Mammary epithelial cell (primary cell): ENCODE measurements at regions of chr1 and their contacts with region 1.

Region 1: GRCh38 chr1:23098463-23099170 is 70.0 kb downstream of the LUZP1 start:
- DNase-seq: peak; percentile 65
- H3K4me3 ChIP-seq: no peak overlapping the region
- H3K27ac ChIP-seq: no peak overlapping the region
- H3K4me1 ChIP-seq: peaks cover 59% of the 10 kb centered on the region
- H3K27me3 ChIP-seq: no peaks in the 10 kb centered on the region
- CTCF ChIP-seq: peak; percentile 92 to 93

Region 2: GRCh38 chr1:23069675-23070074 is 28.9 kb before region 1 on chr1:
- CTCF ChIA-PET with region 1: no interaction called
- dilution Hi-C with region 1: no loop called
- in situ Hi-C with region 1: no loop called
- intact Hi-C with region 1: no loop called
- DNase-seq: no peak
- H3K4me3 ChIP-seq: no peak overlapping the region
- H3K27ac ChIP-seq: no peak overlapping the region
- H3K4me1 ChIP-seq: no peaks in the 10 kb centered on the region
- H3K27me3 ChIP-seq: no peaks in the 10 kb centered on the region
- CTCF ChIP-seq: no peak

Region 3: DNA sequence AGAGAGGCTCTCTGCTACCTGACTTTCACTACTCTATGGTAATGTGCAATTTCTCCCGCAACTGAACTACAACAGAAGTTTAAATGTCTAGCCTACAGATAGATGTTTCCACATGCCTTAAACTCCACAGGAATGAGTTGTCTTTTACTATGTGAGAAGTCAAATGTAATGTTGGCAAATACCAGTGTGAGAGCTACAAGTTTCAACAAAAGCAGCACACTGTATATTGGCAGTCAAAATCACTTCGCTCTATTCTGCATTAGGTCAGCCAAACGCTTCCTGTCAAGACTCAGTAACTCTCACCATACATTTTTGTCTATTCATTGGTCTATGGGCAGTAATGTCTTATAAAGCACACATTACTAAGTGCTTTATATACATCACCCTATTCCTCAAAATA is 28.2 kb after region 1 on chr1:
- CTCF ChIA-PET with region 1: no interaction called
- dilution Hi-C with region 1: no loop called
- in situ Hi-C with region 1: no loop called
- intact Hi-C with region 1: loop called (anchors 2 kb)
- DNase-seq: peak; percentile 91
- H3K4me3 ChIP-seq: peak overlapping the region in 2 of 3 experiments; percentile 3 to 8
- H3K27ac ChIP-seq: peak overlapping the region; percentile 68
- H3K4me1 ChIP-seq: peaks cover 60% of the 10 kb centered on the region
- H3K27me3 ChIP-seq: no peaks in the 10 kb centered on the region
- CTCF ChIP-seq: no peak

Region 4: DNA sequence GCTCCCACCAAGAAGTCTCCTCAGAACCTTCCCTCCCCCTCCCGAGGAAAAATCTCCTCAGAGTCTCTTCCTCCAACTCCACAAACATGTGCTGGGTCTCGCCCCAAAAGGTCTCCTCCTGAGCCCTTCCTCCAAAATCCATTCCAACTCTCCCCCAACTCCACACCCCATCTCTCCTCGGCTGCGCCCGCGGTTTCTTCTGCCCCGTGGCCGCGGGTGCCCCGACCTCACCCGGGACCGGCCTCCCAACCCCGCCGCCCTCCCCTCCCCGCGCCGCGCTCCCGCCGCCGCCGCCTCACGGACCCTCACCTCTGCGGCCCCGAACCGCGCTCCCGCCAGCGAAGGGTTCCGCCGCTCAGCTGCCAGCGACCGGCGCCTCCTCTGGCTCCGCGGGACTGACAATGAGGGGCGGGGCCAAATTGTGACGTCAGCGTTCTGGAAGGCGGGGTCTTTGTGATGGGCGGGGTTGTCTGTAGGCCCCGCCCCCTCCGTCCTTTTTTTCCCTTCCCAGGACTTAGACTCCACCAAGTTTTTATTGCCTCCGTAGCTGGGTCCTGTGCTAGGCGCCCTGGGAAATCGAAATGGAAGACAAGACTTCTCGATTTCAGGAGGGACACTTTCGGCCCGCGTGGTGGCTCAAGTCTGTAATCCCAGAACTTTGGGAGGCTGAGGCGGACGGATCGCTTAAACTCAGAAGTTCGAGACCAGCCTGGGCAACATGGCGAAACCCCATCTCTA is 70.0 kb after region 1 on chr1 and contains the start of gene LUZP1:
- CTCF ChIA-PET with region 1: interaction called, 6 read pairs
- dilution Hi-C with region 1: no loop called
- in situ Hi-C with region 1: no loop called
- intact Hi-C with region 1: loop called (anchors 1 kb)
- DNase-seq: peak; percentile 80
- H3K4me3 ChIP-seq: peak within 1 kb of the TSS; percentile 66 to 99 (median 85)
- H3K27ac ChIP-seq: peak within 1 kb of the TSS; percentile 94
- H3K4me1 ChIP-seq: peaks cover 42% of the 10 kb centered on the region
- H3K27me3 ChIP-seq: no peaks in the 10 kb centered on the region
- CTCF ChIP-seq: no peak
- total RNA-seq, gene LUZP1: 55.2 to 83.2 TPM

Region 5: DNA sequence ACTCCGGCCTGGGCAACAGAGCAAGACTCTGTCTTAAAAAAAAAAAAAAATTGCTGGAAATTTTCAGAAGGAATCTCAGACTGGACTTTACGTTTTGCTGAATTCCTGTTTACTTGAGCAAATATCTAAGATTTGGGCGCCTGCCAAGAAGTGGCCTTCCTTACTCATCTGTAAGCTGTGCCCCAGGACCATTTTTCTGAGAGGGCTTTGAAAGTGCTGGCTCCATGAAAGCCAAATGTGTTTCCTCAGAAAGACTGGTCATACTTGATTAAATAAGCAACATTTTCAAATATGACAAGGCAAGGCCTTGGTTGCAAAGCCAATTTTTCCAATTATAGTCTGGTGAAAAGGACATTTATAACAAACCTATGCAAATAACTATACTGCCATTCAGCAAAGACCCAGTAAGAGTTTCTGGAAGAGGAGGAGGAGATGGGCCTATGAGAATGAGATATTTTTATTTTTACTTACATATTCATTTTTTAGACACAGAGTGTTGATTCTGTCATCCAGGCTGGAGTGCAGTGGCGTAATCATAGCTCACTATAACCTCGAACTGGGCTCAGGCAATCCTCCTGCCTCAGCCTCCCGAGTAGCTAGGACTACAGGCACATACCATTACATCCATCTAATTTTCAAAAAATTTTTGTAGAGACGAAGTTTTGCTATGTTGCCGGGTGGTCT is 175.0 kb after region 1 on chr1:
- CTCF ChIA-PET with region 1: interaction called, 3 read pairs
- dilution Hi-C with region 1: no loop called
- in situ Hi-C with region 1: loop called in 1 of 2 experiments (anchors 5 kb)
- intact Hi-C with region 1: loop called (anchors 2 kb)
- DNase-seq: peak; percentile 36
- H3K4me3 ChIP-seq: no peak overlapping the region
- H3K27ac ChIP-seq: no peak overlapping the region
- H3K4me1 ChIP-seq: peaks cover 4% of the 10 kb centered on the region
- H3K27me3 ChIP-seq: no peaks in the 10 kb centered on the region
- CTCF ChIP-seq: no peak

Region 6: GRCh38 chr1:23282957-23283356 is 184.3 kb after region 1 on chr1:
- CTCF ChIA-PET with region 1: interaction called, 3 read pairs
- dilution Hi-C with region 1: no loop called
- in situ Hi-C with region 1: loop called in 1 of 2 experiments (anchors 5 kb)
- intact Hi-C with region 1: no loop called
- DNase-seq: peak; percentile 57
- H3K4me3 ChIP-seq: no peak overlapping the region
- H3K27ac ChIP-seq: peak overlapping the region; percentile 16
- H3K4me1 ChIP-seq: peaks cover 19% of the 10 kb centered on the region
- H3K27me3 ChIP-seq: no peaks in the 10 kb centered on the region
- CTCF ChIP-seq: no peak

Region 7: GRCh38 chr1:23470282-23471071 is 371.9 kb after region 1 on chr1:
- CTCF ChIA-PET with region 1: no interaction called
- dilution Hi-C with region 1: no loop called
- in situ Hi-C with region 1: no loop called
- intact Hi-C with region 1: no loop called
- DNase-seq: peak; percentile 63
- H3K4me3 ChIP-seq: no peak overlapping the region
- H3K27ac ChIP-seq: no peak overlapping the region
- H3K4me1 ChIP-seq: peaks cover 38% of the 10 kb centered on the region
- H3K27me3 ChIP-seq: no peaks in the 10 kb centered on the region
- CTCF ChIP-seq: no peak